ENCODE measurements at regions of chr12 and their contacts with region 1.

Region 1: DNA sequence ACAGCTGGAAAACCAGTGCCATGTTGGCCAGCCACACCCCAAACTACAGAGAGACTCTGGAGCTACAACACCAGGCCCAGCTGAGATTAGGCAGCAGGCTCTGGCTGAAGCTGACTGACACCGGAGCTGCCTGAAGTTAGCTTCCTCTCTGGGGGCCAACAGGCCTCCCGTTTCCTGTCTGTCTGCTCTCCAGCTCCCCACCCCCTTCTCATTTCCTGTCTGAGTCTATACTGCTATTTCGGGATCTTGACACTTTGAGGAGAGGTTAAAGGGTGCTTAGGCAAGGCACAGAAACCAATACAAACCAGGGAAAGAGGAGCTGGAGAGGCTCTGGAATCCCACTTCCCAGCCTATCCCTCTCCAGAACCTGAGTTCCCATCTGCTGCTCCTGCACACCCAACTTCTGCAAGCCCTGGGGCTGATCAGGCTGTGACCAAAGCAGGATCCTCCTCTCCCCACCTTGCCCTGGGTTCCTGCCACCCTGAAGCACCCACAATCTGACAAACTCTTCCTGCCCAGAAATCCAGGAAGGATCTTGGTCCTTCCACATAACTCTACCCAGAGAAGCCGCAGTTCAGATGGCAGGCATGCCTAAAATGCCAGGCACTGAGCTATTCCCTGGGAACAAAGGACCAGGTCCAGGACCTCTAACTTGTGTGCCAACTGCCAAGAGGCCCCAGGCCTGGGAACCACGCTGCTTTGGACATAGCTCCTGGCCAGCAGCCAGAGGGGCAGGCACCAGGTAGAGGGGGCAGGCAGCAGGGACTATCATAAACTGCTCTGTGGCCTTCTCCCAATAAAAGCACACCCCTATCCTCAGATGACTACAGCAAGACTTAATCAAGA is 39.9 kb downstream of the PRPF40B start:
- DNase-seq: peak; percentile 50 to 91 (median 72)
- ATAC-seq: peak; percentile 98 to 100
- H3K4me3 Mint-ChIP-seq: peak overlapping the region; percentile 71 to 88 (median 84)
- H3K27ac Mint-ChIP-seq: peak overlapping the region; percentile 92 to 99 (median 98)
- H3K4me1 Mint-ChIP-seq: peaks cover 56 to 88% (median 83%) of the 10 kb centered on the region in 4 donors
- H3K27me3 Mint-ChIP-seq: no peaks in the 10 kb centered on the region

Region 2: DNA sequence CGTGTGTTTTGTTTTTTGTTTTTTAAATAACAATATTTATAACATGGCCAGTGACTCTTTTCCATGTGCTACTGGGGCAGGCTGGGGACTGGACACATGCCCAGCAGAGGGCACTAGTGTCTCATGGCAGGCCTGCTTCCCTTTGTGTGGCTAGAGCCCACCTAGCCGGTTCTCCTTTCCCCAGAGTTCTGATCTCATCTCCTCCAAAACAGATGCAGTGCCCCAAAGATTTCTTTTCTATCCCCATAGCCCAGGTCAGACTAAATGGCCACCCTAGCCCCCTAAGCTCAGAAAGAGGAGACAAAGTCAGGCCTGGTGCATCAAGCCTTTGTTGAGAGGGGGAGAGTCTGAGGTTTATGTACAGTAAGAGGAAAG is 18.6 kb before region 1 on chr12:
- POLR2A ChIA-PET with region 1: interaction called, 11 read pairs
- DNase-seq: peak; percentile 71 to 93 (median 84)
- ATAC-seq: peak; percentile 97 to 99
- H3K4me3 Mint-ChIP-seq: peak overlapping the region in 8 of 10 donors; percentile 3 to 68 (median 29)
- H3K27ac Mint-ChIP-seq: peak overlapping the region; percentile 24 to 95 (median 77)
- H3K4me1 Mint-ChIP-seq: peaks cover 21 to 47% (median 39%) of the 10 kb centered on the region in 4 donors
- H3K27me3 Mint-ChIP-seq: no peaks in the 10 kb centered on the region

Region 3: DNA sequence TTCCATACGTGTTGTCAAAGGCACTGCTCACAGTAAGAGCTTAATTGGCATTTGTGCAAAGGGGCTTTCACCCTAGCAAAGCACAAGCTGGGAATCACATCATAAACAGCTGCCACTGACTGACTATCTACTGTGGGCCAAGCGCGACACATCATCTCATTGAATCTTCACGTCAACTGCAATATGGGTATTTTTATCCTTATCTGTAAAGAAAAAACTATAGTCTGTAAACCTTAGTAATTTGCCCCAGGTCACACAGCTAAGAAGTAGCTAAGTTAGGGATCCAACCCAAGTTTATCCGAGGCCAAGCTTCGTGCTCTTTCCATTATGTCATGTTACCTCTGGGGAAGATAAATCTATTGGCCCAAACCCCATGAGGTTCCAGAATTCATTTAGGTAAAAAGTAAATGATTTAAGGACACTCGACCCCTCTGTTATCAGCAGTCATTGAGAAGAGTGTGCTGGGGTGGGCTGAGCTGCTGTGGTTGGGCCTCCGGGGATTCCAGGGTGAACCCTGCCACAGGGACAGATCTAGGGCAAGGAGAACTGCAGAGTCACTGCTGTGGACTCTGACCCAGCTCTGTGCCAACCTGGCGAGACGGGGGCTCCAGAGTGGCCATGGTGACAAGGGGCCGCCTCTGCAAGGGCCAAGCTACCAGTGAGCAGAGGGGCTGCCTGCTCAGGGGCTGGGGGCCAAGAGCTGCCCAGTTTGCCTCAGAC is 137.4 kb after region 1 on chr12:
- POLR2A ChIA-PET with region 1: no interaction called
- DNase-seq: no peak
- ATAC-seq: no peak
- H3K4me3 Mint-ChIP-seq: no peak overlapping the region
- H3K27ac Mint-ChIP-seq: peak overlapping the region in 1 of 10 donors; percentile 24
- H3K4me1 Mint-ChIP-seq: peaks cover 0 to 8% (median 0%) of the 10 kb centered on the region in 4 donors
- H3K27me3 Mint-ChIP-seq: no peaks in the 10 kb centered on the region

Measured in naive thymus-derived CD8-positive, alpha-beta T cell (primary cell).